Dendritic cell treated with granulocyte-macrophage colony-stimulating factor and Interleukin-4, amounts not matched to agents 40 ng/mL and 50 ng/mL, for 4 days (primary cell): ENCODE measurements at regions of chr10 and their contacts with region 1.

Region 1: DNA sequence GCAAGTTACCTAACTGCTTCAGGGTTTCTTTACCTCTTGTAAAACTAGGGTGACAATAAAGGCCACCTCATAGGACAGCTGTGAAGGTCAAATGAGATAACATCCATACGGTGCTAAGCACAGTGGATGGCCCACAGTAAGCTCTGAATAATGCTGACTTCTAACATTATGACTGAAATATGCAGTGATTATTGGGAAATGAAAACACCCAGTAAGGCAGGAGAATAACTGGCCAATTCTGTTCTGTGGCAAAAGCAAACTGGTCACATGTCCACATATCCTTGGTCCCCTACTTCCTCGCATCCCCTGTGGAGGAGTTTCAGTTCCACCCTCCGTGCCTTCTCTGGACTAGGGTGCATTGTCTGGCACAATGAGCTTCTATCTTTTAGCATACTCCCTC is 1.4 kb downstream of the CUBN start:
- H3K4me3 Mint-ChIP-seq: no peak overlapping the region
- H3K27ac Mint-ChIP-seq: peak overlapping the region; percentile 61
- H3K4me1 Mint-ChIP-seq: peaks cover 31% of the 10 kb centered on the region
- H3K27me3 Mint-ChIP-seq: no peaks in the 10 kb centered on the region

Region 2: DNA sequence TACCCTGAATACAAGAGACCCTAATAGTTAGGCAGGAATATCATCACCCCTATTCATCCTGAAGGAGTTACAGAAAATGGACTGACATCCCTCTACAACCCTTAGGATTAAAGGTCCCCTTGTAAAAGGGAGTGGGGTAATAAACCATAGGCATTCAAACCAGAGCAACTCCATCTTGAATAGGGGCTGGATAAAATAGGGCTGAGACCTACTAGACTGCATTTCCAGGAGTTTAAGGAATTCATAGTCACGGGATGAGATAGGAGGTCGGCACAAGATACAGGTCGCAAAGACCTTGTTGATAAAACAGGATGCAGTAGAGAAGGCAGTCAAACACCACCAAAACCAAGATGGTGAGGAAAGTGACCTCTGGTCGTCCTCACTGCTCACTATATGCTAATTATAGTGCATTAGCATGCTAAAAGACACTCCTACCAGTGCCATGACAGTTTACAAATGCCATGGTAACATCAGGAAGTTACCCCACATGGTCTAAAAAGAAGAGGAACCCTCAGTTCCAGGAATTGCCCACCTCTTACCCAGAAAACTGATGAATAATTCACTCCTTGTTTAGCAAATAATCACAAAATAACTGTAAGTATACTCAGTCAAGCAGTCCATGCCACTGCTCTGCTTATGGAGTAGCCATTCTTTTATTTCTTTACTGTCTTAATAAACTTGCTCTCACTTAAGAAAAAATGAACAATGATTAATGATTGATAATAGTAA is 35.9 kb before region 1 on chr10:
- intact Hi-C with region 1: loop called (anchors 5 kb)
- H3K4me3 Mint-ChIP-seq: no peak overlapping the region
- H3K27ac Mint-ChIP-seq: peak overlapping the region; percentile 88
- H3K4me1 Mint-ChIP-seq: peaks cover 42% of the 10 kb centered on the region
- H3K27me3 Mint-ChIP-seq: no peaks in the 10 kb centered on the region

Region 3: DNA sequence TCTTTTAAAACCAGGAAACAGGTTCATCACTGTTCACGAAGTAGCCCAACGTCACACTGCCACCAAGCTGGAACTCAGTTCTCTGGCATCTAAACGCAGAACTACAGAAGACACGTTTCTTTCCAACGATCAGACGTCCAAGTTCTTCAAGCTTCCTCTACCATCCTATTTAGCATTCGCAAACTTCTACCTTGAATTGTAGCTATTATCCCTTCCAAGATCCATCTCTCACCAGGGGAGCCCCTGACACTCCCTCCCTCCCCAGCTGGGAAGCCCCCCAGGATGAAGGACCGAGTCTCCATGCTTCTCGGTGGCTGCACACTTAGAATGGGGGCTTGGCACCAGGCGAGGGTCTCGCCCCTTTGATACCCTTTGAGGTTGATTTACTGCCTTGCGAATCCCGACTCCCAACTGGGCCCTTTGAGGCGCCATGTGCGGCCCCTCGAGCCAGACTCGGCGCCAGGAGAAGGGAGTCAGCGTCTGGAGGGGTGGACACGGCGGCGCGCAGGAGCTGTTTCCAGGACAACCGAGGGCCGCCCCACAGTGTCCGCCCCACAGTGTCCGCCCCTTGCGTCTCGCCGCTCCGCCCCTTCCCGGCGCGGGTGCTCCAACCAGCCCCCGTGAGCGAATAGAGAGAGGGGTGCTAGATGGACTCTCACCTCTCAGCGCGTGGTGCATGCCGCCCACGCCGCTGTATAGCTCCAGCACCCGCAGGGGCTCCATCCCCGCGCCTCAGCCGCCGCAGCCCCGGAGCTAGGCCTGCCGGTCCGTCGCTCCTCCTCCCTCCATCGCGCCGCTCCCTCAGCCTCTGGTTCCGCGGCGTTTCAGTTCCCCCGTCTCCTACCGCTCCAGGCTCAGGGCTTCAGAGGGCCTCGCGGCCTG is 72.9 kb after region 1 on chr10 and contains the start of gene TRDMT1:
- intact Hi-C with region 1: loop called (anchors 5 kb)
- H3K4me3 Mint-ChIP-seq: peak within 1 kb of the TSS; percentile 96
- H3K27ac Mint-ChIP-seq: peak within 1 kb of the TSS; percentile 99
- H3K4me1 Mint-ChIP-seq: peaks cover 57% of the 10 kb centered on the region
- H3K27me3 Mint-ChIP-seq: no peaks in the 10 kb centered on the region